CD4-positive, alpha-beta T cell (primary cell): ENCODE measurements at regions of chr20 and their contacts with region 1.

Region 1: DNA sequence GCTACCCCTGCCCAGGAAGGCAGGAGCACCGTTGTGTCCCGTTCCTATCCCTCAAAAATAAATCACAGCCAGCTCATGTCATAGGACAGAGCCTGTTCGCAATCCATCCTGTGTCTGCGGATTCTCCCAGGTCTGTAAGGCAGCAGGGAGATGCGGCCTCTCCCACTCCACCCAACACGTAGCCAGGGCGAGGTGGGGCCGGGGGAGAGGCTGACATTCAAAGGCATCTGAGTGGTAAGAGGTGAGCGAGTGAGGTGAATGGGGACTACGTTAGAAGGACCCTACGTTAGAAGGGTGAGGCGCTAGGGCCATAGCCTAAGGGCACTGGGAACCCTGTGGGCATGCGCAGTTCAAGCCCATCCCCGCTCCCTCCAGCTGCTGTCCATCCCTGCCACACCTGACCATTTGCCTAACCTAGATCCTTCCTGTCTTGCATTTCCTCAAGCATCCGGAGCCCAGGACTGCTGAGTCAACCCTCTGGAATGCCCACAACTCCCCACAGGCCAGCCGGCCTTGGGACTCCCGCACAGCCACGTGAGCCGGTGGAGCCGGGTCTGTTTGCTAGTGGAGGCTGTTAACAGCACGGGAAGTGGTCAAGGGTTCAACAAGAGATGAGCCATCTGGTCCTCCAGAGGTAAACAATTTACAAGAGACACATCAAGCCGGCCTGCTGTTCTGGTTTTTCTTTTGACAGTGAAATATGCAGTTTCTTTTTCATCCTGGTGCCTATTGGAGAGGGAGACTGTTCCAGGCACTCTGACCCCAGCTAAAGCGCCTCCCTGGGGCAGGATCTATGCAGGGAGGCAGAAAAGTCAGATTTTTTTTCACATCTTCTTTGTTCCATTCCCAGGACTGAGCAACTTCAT is 45.9 kb downstream of the RIPOR3 start:
- DNase-seq: no peak
- ATAC-seq: no peak
- H3K4me3 ChIP-seq: no peak overlapping the region
- H3K4me3 Mint-ChIP-seq: no peak overlapping the region
- H3K27ac ChIP-seq: no peak overlapping the region
- H3K27ac Mint-ChIP-seq: no peak overlapping the region
- H3K4me1 ChIP-seq: no peaks in the 10 kb centered on the region
- H3K4me1 Mint-ChIP-seq: no peaks in the 10 kb centered on the region
- H3K27me3 ChIP-seq: peaks cover 0 to 2% of the 10 kb centered on the region in 2 experiments
- H3K27me3 Mint-ChIP-seq: no peaks in the 10 kb centered on the region
- CTCF ChIP-seq: no peak

Region 2: GRCh38 chr20:50353289-50353961 is 292.1 kb before region 1 on chr20:
- CTCF ChIA-PET with region 1: no interaction called
- POLR2A ChIA-PET with region 1: no interaction called
- intact Hi-C with region 1: no loop called
- DNase-seq: no peak
- ATAC-seq: no peak
- H3K4me3 ChIP-seq: no peak overlapping the region
- H3K4me3 Mint-ChIP-seq: no peak overlapping the region
- H3K27ac ChIP-seq: no peak overlapping the region
- H3K27ac Mint-ChIP-seq: no peak overlapping the region
- H3K4me1 ChIP-seq: peaks cover 4% of the 10 kb centered on the region
- H3K4me1 Mint-ChIP-seq: no peaks in the 10 kb centered on the region
- H3K27me3 ChIP-seq: no peaks in the 10 kb centered on the region
- H3K27me3 Mint-ChIP-seq: no peaks in the 10 kb centered on the region
- CTCF ChIP-seq: no peak

Region 3: DNA sequence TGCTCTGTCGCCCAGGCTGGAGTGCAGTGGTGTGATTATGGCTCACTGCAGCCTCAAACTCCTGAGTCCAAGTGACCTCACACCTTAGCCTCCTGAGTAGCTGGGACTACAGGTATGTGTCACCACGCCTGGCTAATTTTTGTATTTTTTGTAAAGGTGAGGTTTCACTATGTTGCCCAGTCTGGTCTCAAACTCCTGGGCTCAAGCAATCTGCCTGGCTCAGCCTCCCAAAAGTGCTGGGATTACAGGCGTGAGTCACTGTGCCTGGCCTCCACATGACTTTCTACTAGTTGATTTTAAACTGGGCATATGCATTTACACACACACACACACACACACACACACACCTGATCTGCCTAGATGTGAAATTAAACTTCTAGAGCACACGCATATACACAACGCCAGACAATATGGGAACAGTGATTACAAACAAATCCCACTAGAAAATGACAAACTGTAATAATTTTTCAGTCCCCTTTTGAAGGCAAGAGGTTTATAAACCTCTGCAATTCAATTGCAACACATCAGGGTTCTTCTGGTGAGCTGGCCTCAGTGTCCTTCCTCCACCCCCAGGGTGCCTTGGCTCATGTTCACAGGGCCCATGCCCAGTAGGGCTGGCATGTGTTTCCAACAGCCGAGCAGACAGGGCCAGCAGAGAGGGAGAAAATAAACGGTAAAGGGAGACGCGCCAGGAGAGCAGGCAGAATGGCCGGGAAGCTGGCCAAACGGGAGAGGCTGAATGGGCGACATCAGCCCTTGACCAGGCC is 117.1 kb after region 1 on chr20:
- CTCF ChIA-PET with region 1: no interaction called
- POLR2A ChIA-PET with region 1: no interaction called
- intact Hi-C with region 1: loop called in 1 of 2 experiments (anchors 10 kb)
- DNase-seq: no peak
- ATAC-seq: no peak
- H3K4me3 ChIP-seq: no peak overlapping the region
- H3K4me3 Mint-ChIP-seq: no peak overlapping the region
- H3K27ac ChIP-seq: no peak overlapping the region
- H3K27ac Mint-ChIP-seq: no peak overlapping the region
- H3K4me1 ChIP-seq: no peaks in the 10 kb centered on the region
- H3K4me1 Mint-ChIP-seq: no peaks in the 10 kb centered on the region
- H3K27me3 ChIP-seq: no peaks in the 10 kb centered on the region
- H3K27me3 Mint-ChIP-seq: no peaks in the 10 kb centered on the region
- CTCF ChIP-seq: no peak